ENCODE measurements at regions of chr10 and their contacts with region 1.

Region 1: GRCh38 chr10:122435212-122435827 is 19.1 kb upstream of the ARMS2 start:
- DNase-seq: no peak
- ATAC-seq: no peak
- H3K4me3 Mint-ChIP-seq: no peak overlapping the region
- H3K27ac Mint-ChIP-seq: no peak overlapping the region
- H3K4me1 Mint-ChIP-seq: no peaks in the 10 kb centered on the region
- H3K27me3 Mint-ChIP-seq: no peaks in the 10 kb centered on the region
- CTCF ChIP-seq: peak; percentile 92

Region 2: DNA sequence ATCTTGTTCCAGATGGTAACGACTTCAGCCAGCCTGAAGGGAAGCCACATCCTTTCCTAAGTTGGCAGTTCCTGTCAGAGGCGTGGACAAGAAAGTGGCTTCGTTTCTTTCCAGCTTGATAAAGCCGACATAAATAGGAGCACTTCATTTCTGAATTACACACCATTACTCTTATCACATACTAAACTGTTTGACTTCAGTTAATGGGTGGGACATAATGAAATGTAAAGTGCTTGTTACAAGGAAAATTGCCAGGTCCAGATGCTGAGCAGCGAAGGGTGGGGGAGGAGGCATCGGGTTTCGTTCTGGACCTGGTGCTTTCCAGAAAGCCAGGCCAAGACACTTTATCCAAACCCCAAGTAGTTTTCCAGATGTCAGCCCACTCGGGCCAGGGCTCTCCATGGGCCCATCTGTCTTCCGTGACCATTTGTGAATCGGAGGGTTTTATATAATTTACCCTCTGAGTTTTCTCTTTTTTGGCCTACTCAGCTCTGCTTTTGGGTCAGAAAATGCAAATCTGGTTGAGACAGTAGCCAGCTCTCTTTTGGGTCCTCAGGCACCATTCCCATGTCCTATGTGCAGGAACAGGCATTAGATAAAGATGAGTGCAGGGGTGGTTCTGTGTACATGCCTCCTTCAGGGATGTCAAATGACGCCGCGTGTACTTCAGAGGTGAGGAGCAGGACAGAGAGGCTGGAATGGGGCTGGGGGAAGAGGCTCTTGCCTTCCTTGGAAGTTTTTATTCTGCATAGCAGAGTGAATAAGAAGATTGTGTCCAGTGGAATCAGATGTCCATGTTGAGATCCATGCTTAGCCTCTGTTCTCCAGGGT is 356.1 kb before region 1 on chr10:
- CTCF ChIA-PET with region 1: no interaction called
- POLR2A ChIA-PET with region 1: no interaction called
- intact Hi-C with region 1: no loop called
- DNase-seq: no peak
- ATAC-seq: no peak
- H3K4me3 Mint-ChIP-seq: no peak overlapping the region
- H3K27ac Mint-ChIP-seq: no peak overlapping the region
- H3K4me1 Mint-ChIP-seq: no peaks in the 10 kb centered on the region
- H3K27me3 Mint-ChIP-seq: no peaks in the 10 kb centered on the region
- CTCF ChIP-seq: no peak

Region 3: GRCh38 chr10:122258136-122259074 is 176.9 kb before region 1 on chr10:
- CTCF ChIA-PET with region 1: no interaction called
- POLR2A ChIA-PET with region 1: no interaction called
- intact Hi-C with region 1: no loop called
- DNase-seq: peak; percentile 8
- ATAC-seq: no peak
- H3K4me3 Mint-ChIP-seq: no peak overlapping the region
- H3K27ac Mint-ChIP-seq: no peak overlapping the region
- H3K4me1 Mint-ChIP-seq: no peaks in the 10 kb centered on the region
- H3K27me3 Mint-ChIP-seq: peaks cover 7% of the 10 kb centered on the region
- CTCF ChIP-seq: no peak

Region 4: GRCh38 chr10:122298598-122299301 is 136.6 kb before region 1 on chr10:
- CTCF ChIA-PET with region 1: interaction called, 96 read pairs
- POLR2A ChIA-PET with region 1: no interaction called
- intact Hi-C with region 1: loop called (anchors 2 kb)
- DNase-seq: peak; percentile 81
- ATAC-seq: peak; percentile 96
- H3K4me3 Mint-ChIP-seq: no peak overlapping the region
- H3K27ac Mint-ChIP-seq: no peak overlapping the region
- H3K4me1 Mint-ChIP-seq: peaks cover 6% of the 10 kb centered on the region
- H3K27me3 Mint-ChIP-seq: peaks cover 2% of the 10 kb centered on the region
- CTCF ChIP-seq: peak; percentile 94

Region 5: DNA sequence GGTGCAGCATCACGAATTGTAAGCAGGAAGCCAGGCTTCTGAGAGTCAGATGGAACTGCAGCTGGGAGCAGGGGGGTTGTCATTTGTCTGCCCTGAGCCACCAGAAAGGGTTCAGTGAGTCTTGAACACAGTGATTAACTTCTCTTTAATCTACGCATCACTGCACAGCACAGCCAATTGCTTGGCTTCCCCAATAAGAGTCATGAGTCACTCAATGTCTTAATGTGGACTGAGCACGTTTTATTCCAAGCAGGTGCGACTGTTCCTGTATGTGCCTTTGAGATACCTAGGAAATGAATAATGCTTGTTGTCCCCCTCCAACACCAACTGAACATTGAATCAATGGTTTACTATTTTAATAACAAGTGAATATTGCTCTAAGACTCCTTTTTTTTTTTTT is 86.8 kb before region 1 on chr10:
- CTCF ChIA-PET with region 1: interaction called, 132 read pairs
- POLR2A ChIA-PET with region 1: no interaction called
- intact Hi-C with region 1: no loop called
- DNase-seq: no peak
- ATAC-seq: no peak
- H3K4me3 Mint-ChIP-seq: no peak overlapping the region
- H3K27ac Mint-ChIP-seq: no peak overlapping the region
- H3K4me1 Mint-ChIP-seq: peaks cover 6% of the 10 kb centered on the region
- H3K27me3 Mint-ChIP-seq: no peaks in the 10 kb centered on the region
- CTCF ChIP-seq: no peak

Region 6: DNA sequence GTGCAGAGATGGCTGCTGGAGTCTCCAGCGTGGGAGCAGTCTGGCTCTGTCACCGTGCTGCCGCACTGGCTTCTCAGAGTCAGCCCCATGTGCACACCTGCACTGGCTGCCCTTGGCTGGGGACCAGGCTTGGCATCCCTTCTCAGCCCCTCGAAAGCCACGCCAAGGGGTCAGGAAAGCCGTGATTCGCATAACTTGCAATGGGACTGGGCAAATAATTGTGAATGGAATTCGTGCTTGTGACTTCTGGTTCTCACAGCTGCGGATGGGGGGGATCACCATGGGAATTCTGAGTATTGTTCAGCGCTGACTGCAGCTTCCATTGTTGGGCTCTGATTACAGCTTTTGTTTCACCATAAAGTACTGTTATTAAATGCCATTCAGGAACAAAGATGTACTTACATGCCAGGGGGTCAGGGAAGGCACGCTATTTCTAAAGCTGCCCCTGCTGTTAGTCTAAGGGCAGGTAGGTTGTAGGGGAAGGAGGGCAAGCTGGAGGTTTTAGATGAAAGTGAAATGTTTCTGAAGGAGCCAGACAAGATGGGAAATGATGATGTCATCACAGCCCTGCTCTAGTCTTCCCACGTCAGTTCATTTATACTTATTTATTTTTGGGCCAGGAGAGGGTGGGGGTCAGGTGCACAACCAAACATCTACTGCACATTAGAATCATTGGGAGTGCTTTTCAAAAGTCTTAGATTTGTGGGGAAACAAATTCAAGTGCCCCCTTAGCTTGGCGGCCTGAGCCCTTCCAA is 66.6 kb before region 1 on chr10:
- CTCF ChIA-PET with region 1: interaction called, 24 read pairs
- POLR2A ChIA-PET with region 1: interaction called, 3 read pairs
- intact Hi-C with region 1: no loop called
- DNase-seq: no peak
- ATAC-seq: no peak
- H3K4me3 Mint-ChIP-seq: no peak overlapping the region
- H3K27ac Mint-ChIP-seq: no peak overlapping the region
- H3K4me1 Mint-ChIP-seq: peaks cover 4% of the 10 kb centered on the region
- H3K27me3 Mint-ChIP-seq: peaks cover 13% of the 10 kb centered on the region
- CTCF ChIP-seq: no peak

Region 7: DNA sequence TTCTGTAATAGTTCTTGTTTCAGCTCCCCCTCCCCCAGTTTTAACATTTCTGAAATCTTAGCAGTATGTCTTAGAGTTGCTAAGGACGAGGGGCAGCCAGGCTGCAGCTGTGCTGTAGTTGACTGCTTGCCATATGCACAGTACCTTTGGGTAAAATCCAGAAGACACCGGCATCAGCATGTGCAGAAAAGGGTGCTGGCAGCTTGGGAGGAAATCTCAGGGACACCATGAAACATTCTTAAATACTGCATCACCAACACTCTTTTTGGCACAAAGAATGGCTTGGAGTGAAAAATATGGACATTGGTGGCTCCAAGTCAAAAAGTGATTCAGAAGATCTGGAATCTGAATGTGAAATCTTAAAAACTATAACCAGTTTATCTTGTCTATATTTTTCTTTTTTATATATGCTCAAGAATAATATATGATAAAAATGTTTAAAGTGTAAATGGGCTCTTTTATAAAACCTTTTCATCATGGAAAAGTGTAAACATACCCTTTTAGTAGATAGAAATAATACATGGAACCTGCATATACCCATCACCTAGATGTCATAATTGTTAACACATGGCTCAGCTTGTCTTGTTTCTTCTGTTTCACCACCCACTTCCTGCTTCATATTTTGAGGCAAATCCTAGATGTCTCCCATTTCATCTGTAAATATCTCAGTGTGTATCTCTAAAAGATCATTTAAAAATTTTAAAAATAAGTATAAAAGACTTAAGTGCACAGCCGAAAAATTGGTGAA is 15.3 kb before region 1 on chr10:
- CTCF ChIA-PET with region 1: interaction called, 13 read pairs
- POLR2A ChIA-PET with region 1: interaction called, 8 read pairs
- intact Hi-C with region 1: no loop called
- DNase-seq: no peak
- ATAC-seq: no peak
- H3K4me3 Mint-ChIP-seq: no peak overlapping the region
- H3K27ac Mint-ChIP-seq: no peak overlapping the region
- H3K4me1 Mint-ChIP-seq: peaks cover 78% of the 10 kb centered on the region
- H3K27me3 Mint-ChIP-seq: no peaks in the 10 kb centered on the region
- CTCF ChIP-seq: no peak